ENCODE measurements at regions of chr22 and their contacts with region 1.

Region 1: DNA sequence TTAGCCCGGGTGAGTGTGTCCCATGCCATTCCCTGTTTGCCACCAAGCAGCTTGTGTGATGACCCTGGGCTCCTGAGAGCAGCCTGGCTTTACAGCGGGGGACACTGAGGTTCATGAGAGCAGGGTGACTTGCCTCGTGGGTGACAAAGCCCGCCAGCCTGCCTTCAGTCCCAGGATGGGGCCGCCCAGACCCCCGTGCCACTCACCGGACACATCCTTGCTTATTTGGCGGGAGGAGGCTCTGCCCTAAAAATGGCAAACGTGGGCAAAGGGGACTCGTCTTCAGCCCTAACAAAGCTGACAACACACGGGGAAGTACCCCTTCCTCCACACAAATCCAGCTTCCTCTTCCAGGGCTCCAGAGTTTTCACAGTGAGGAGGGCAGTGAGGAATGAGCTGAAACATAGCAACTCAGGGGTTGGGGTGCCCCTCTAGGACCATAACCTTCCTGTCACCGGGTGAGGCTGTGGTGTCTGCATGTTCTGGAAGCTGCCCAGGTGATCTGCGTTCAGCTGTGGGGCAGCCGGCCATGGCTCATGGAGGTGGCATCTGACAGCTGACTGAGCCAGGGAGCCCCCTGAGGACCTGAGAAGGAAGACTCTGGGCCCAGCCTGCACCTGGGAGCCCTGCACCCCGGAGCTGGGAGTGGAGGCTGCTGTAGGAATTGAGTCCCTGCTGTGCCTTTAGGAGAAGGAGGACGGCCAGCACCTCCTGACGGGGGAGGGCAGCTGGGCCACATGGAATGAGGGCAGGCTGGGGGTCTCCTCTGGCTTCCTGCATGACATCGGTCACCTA is 16.7 kb downstream of the RIBC2 start:
- DNase-seq: peak in 1 of 3 donors; percentile 38
- ATAC-seq: no peak
- H3K4me3 ChIP-seq: no peak overlapping the region
- H3K27ac ChIP-seq: no peak overlapping the region
- H3K4me1 ChIP-seq: peaks cover 0 to 1% (median 0%) of the 10 kb centered on the region in 4 donors
- H3K27me3 ChIP-seq: no peaks in the 10 kb centered on the region
- CTCF ChIP-seq: no peak
- POLR2A ChIP-seq: no peak

Region 2: DNA sequence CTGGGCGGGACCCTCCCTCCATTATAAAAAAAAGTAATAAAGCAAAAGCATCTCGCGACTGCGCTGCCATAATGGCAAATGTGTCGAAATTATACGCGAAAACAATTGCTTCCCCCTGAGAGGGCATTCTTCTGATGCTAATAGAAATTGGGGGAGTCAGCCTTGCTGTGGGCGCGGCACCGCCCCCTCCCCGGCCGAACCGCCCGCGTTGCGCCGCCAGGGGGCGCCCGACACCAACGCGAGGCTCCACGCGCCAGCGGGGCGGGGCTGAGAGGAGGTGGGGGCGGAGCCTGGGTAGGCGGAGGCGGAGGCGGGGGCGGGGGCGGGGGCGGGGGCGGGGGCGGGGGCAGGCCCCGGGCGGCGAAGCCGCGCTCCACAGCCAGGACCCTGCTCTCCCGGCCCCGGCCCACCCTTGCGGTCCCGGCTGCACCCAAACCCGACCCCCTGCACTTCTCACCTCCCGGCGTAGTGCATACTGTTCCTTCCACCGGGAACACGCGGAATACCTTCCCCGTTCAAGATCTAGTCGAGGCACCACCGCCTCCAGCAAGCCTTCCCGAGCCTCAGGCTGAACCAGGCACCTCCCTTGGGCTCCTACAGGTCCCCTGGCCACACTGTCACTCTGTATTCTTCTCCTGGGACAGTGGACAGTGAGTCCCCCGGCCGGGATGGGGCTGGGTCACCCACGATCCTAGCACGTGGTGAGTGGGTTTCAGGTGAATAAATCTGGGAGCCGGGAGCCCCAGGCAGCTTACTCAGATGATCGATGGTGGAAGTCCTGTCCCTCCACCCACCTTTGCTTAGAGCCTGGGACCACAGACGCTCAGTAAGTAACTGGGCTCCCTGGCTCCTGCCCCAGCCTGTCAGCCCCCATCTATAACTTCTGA is 161.0 kb before region 1 on chr22:
- intact Hi-C with region 1: loop called (anchors 5 kb)
- DNase-seq: peak; percentile 89 to 92 (median 89)
- ATAC-seq: peak; percentile 89 to 98 (median 92)
- H3K4me3 ChIP-seq: peak overlapping the region; percentile 51 to 56 (median 55)
- H3K27ac ChIP-seq: no peak overlapping the region
- H3K4me1 ChIP-seq: peaks cover 0 to 2% (median 0%) of the 10 kb centered on the region in 4 donors
- H3K27me3 ChIP-seq: no peaks in the 10 kb centered on the region
- CTCF ChIP-seq: peak; percentile 82 to 96 (median 94)
- POLR2A ChIP-seq: no peak

Region 3: DNA sequence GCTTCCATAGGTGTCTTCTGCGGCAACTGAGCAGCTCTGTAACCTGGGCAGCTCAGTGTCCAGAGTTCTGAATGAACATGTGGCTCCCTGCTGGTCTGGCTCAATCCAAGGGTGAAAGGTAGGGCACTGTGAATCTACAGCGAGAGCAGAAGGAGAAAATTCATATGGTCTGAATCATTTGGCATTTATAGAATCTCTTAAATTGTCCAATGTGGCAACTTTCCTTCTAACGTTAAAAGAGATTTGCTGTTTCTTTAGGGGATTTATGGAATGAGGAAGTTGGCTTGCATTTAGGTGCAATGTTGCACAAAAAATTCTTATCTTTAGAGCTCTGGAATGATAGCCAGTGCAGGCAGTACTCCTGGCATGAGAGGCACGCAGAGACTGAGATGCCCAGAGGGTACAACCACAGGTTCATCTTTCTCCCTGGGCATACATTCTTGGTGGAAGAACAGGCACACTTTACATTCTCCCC is 258.5 kb after region 1 on chr22:
- intact Hi-C with region 1: no loop called
- DNase-seq: peak in 2 of 3 donors; percentile 44 to 69
- ATAC-seq: peak; percentile 85 to 97 (median 94)
- H3K4me3 ChIP-seq: no peak overlapping the region
- H3K27ac ChIP-seq: peak overlapping the region; percentile 4 to 29 (median 16)
- H3K4me1 ChIP-seq: peaks cover 0 to 17% (median 3%) of the 10 kb centered on the region in 4 donors
- H3K27me3 ChIP-seq: no peaks in the 10 kb centered on the region
- CTCF ChIP-seq: no peak
- POLR2A ChIP-seq: peak; percentile 26

Measured in right lobe of liver (tissue), 6 donors.